ENCODE measurements at regions of chr1 and their contacts with region 1.

Region 1: GRCh38 chr1:53945433-53946251 is at the start of gene IFT25:
- DNase-seq: peak; percentile 95
- H3K4me3 Mint-ChIP-seq: peak within 1 kb of the TSS; percentile 85
- H3K27ac Mint-ChIP-seq: peak within 1 kb of the TSS; percentile 75
- H3K4me1 Mint-ChIP-seq: peaks cover 36% of the 10 kb centered on the region
- H3K27me3 Mint-ChIP-seq: no peaks in the 10 kb centered on the region
- CTCF ChIP-seq: no peak
- total RNA-seq, gene IFT25: 20.6 and 22.3 TPM in 2 replicates

Region 2: DNA sequence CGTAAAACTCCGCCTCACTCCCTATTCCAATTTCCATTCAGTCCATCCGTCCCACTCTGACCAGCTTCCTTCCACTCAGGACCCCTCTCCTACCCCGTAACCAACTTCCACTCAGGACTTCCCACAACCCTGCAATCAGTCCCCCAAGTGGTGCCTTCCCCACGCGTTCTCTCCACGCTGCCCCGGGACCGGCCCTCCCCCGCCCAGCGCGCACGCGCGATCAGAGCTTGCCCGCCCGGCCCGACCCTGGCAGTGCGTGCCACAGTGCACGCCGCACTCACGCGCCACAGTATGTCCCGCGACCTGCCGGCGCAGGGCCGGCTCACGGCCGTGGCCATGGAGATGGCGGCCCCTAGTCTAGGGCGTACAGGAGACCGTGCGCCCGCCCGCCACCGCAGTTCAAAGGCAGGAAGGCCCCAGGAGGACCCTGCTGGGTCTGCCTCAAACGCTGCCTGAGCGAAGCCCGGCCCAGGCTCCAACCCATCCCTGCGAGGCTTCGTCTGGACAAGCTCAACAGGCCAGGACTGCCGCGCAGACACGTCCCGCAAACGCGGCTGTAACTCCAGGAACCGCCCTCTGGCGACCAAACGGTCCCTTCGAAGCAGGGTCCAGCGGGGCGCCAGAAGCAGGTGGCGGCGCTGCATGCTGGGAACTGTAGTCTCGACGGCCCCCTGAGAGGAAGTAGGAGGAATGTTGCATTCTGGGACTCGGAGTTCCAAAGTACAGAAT is 107.6 kb before region 1 on chr1 and contains the start of gene NDC1:
- CTCF ChIA-PET with region 1: interaction called, 3 read pairs
- POLR2A ChIA-PET with region 1: interaction called, 10 read pairs
- intact Hi-C with region 1: no loop called
- DNase-seq: peak; percentile 98
- H3K4me3 Mint-ChIP-seq: peak within 1 kb of the TSS; percentile 100
- H3K27ac Mint-ChIP-seq: peak within 1 kb of the TSS; percentile 97
- H3K4me1 Mint-ChIP-seq: peaks cover 10% of the 10 kb centered on the region
- H3K27me3 Mint-ChIP-seq: no peaks in the 10 kb centered on the region
- CTCF ChIP-seq: no peak
- total RNA-seq, gene NDC1: 17.5 and 18.7 TPM in 2 replicates

Region 3: GRCh38 chr1:53878492-53879105 is 67.0 kb before region 1 on chr1:
- CTCF ChIA-PET with region 1: interaction called, 59 read pairs
- POLR2A ChIA-PET with region 1: interaction called, 13 read pairs
- intact Hi-C with region 1: loop called (anchors 1 kb)
- DNase-seq: peak; percentile 59
- H3K4me3 Mint-ChIP-seq: no peak overlapping the region
- H3K27ac Mint-ChIP-seq: no peak overlapping the region
- H3K4me1 Mint-ChIP-seq: no peaks in the 10 kb centered on the region
- H3K27me3 Mint-ChIP-seq: no peaks in the 10 kb centered on the region
- CTCF ChIP-seq: peak; percentile 63

Region 4: GRCh38 chr1:53909946-53910345 is 35.7 kb before region 1 on chr1:
- CTCF ChIA-PET with region 1: interaction called, 5 read pairs
- POLR2A ChIA-PET with region 1: interaction called, 15 read pairs
- intact Hi-C with region 1: no loop called
- DNase-seq: no peak
- H3K4me3 Mint-ChIP-seq: no peak overlapping the region
- H3K27ac Mint-ChIP-seq: no peak overlapping the region
- H3K4me1 Mint-ChIP-seq: no peaks in the 10 kb centered on the region
- H3K27me3 Mint-ChIP-seq: no peaks in the 10 kb centered on the region
- CTCF ChIP-seq: no peak

Region 5: DNA sequence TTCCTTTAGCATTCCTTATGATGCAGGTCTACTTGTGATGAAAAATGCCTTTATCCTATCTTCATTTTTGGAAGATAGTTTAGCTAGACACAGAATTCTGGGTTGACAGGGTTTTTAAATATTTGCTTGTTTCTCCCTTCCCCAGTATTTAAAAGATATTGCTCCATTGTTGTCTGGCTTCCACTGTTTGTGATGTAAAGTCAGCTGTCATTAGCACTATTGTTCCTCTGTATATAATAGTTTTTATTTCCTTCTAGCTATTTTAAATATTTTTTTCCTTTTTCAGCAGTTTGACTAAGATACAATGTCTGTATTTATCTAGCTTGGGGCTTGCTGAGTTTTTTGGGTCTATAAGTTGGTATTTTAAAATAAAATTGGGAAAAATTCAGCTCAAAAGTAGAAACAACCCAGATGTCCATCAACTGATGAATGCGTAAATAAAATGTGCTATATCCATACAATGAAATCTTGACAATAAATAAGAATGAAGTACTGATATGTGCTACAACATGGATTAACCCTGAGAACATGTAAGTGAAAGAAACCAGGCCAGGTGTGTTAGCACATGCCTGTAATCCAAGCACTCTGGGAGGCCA is 11.4 kb before region 1 on chr1:
- CTCF ChIA-PET with region 1: interaction called, 7 read pairs
- POLR2A ChIA-PET with region 1: interaction called, 12 read pairs
- intact Hi-C with region 1: no loop called
- DNase-seq: no peak
- H3K4me3 Mint-ChIP-seq: no peak overlapping the region
- H3K27ac Mint-ChIP-seq: no peak overlapping the region
- H3K4me1 Mint-ChIP-seq: peaks cover 9% of the 10 kb centered on the region
- H3K27me3 Mint-ChIP-seq: no peaks in the 10 kb centered on the region
- CTCF ChIP-seq: no peak

Region 6: DNA sequence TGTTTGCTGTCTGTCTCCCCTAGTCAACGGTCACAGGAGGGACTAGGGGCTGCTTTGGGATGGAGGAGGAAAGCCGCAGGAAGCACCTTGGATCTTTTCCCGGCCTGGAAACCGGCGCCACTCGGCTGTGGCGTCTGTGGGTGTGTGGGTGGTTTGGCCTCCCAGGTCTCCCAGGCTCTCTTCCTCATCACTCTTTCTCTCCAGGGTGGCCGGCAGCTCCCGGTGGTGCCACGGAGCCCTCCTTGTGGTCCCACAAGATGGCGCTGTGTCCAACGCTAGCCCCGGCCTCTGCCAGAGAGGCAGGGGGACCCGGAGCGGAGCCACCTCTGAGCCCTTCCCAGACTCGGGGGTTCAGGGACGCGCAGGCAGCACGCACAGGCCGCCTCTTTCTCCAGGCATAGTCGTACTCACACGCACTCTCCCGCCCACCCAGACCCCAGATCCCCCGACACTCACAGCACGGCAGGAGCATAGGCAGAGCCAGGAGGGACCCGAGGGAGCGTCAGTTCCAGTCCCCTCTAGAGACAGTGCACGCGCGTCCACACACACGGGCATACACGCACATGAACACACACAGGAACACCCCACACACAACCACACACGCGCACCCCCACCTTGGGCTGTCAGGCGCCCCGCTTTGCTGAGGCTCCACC is 176.0 kb after region 1 on chr1:
- CTCF ChIA-PET with region 1: no interaction called
- POLR2A ChIA-PET with region 1: no interaction called
- intact Hi-C with region 1: no loop called
- DNase-seq: peak; percentile 65
- H3K4me3 Mint-ChIP-seq: no peak overlapping the region
- H3K27ac Mint-ChIP-seq: no peak overlapping the region
- H3K4me1 Mint-ChIP-seq: no peaks in the 10 kb centered on the region
- H3K27me3 Mint-ChIP-seq: no peaks in the 10 kb centered on the region
- CTCF ChIP-seq: peak; percentile 58